Heart left ventricle (tissue), 16 donors: ENCODE measurements at regions of chr1 and their contacts with region 1.

Region 1: DNA sequence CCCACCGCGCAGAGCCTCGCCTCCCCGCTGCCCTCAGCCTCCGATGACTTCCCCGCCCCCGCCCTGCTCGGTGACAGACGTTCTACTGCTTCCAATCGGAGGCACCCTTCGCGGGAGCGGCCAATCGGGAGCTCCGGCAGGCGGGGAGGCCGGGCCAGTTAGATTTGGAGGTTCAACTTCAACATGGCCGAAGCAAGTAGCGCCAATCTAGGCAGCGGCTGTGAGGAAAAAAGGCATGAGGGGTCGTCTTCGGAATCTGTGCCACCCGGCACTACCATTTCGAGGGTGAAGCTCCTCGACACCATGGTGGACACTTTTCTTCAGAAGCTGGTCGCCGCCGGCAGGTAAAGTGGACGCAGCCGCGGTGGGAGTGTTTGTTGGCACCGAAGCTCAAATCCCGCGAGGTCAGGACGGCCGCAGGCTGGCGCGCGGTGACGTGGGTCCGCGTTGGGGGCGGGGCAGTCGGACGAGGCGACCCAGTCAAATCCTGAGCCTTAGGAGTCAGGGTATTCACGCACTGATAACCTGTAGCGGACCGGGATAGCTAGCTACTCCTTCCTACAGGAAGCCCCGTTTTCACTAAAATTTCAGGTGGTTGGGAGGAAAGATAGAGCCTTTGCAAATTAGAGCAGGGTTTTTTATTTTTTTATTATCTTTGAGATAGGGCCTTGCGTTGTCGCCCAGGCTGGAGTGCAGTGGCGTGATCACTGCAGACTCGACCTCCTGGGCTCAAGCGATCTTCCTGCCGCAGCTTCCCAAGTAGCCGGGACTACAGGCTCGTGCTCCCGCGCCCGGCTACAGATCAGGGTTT is at the start of gene PMF1:
- DNase-seq: peak; percentile 97 to 99 (median 98)
- ATAC-seq: peak; percentile 98 to 99 (median 98)
- H3K4me3 ChIP-seq: peak within 1 kb of the TSS; percentile 45 to 84 (median 68)
- H3K27ac ChIP-seq: peak within 1 kb of the TSS; percentile 89 to 99 (median 96)
- H3K4me1 ChIP-seq: peaks cover 0 to 33% (median 20%) of the 10 kb centered on the region in 12 donors
- H3K27me3 ChIP-seq: no peaks in the 10 kb centered on the region
- CTCF ChIP-seq: peak in 1 of 12 donors; percentile 18
- POLR2A ChIP-seq: peak in 1 of 2 donors; percentile 82
- total RNA-seq, gene PMF1: 57.8 to 116 (median 62.4) TPM

Region 2: GRCh38 chr1:156146020-156146768 is 66.8 kb before region 1 on chr1:
- intact Hi-C with region 1: loop called in 1 of 10 experiments (anchors 5 kb)
- DNase-seq: peak; percentile 77 to 88 (median 82)
- ATAC-seq: peak; percentile 45 to 68 (median 54)
- H3K4me3 ChIP-seq: peak overlapping the region in 3 of 12 donors; percentile 5 to 23 (median 11)
- H3K27ac ChIP-seq: peak overlapping the region in 1 of 12 donors; percentile 18
- H3K4me1 ChIP-seq: peaks cover 5 to 52% (median 17%) of the 10 kb centered on the region in 12 donors
- H3K27me3 ChIP-seq: peaks cover 0 to 19% (median 2%) of the 10 kb centered on the region in 9 donors
- CTCF ChIP-seq: peak; percentile 54 to 77 (median 67)
- POLR2A ChIP-seq: no peak

Region 3: DNA sequence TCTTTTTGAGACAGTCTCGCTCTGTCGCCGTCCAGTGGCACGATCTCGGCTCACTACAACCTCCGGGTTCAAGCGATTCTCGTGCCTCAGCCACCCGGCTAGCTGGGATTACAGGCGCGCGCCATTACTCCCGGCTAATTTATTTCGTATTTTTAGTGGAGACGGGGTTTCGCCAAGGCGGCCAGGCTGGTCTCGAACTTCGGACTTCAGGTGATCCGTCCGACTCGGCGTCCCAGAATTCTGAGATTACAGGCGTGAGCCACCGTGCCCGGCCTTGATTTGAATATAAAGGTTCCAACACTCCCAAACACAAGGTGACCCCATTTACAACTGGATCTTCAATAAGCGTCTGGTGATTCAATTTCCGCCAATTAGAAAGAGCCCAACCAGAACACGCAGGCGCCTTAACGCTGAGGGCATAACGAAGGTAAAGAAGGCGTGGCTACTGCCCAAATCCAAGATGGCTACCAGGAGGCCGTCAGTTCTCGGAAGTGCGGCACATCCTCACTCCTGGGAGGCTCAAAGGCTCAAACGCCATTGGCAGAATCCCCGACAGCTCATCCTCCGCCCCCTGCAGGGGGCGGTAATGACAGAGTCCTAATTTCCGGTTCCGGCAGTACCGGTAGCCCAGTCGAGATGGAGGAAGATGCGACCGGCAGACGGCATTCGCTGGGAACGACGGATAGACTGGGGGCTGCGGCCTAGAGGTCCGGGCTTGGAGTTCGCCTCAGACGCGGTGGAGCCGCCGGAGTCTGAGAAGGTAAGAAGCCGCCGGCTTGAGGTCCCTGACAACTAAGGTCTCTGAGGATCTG is 19.3 kb before region 1 on chr1 and contains the start of gene SLC25A44:
- intact Hi-C with region 1: loop called in 1 of 10 experiments (anchors 2 kb)
- DNase-seq: peak; percentile 96 to 97 (median 97)
- ATAC-seq: peak; percentile 99 to 100 (median 100)
- H3K4me3 ChIP-seq: peak within 1 kb of the TSS; percentile 59 to 99 (median 82)
- H3K27ac ChIP-seq: peak within 1 kb of the TSS in 11 of 12 donors; percentile 74 to 92 (median 88)
- H3K4me1 ChIP-seq: peaks cover 0 to 51% (median 27%) of the 10 kb centered on the region in 12 donors
- H3K27me3 ChIP-seq: no peaks in the 10 kb centered on the region
- CTCF ChIP-seq: peak; percentile 35 to 82 (median 66)
- POLR2A ChIP-seq: peak in 1 of 2 donors; percentile 71
- total RNA-seq, gene SLC25A44: 16.4 to 27.4 (median 20.5) TPM